Heart right ventricle (tissue), 16 donors: ENCODE measurements at regions of chr5 and their contacts with region 1.

Region 1: DNA sequence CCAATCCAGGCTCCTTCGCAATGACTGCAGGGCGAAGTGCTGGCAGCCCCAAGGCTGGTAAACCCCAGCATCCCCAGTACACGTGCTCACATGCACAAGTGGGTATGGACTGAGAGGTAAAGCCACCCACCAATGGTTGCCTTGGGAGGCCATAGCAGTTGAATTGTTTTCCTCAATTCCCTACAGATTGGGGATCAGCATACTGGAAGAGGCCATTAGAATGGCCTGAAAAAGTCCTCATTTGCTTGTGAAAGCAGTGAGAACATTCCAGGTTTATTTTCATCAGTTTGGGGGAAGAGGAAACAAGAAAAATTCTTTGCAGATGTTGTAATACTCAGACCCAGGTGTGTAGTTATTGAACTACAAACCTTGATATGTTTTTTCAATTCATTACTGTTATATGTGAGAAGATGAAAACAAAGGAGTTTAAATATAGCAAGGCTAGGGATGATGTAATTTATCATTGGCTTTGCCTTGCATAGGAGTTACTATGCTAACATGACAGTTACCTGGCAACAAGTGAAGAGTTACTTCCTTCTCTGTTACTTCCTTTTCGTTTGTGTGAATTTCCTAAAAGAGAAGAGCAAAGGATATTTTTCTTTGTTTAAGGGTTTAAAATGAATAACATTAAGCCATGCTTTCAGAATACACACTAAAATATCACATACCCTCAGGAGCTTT is 36.4 kb downstream of the MTMR12 start:
- DNase-seq: no peak
- ATAC-seq: peak; percentile 56 to 81 (median 74)
- H3K4me3 ChIP-seq: no peak overlapping the region
- H3K27ac ChIP-seq: peak overlapping the region in 9 of 10 donors; percentile 34 to 77 (median 65)
- H3K4me1 ChIP-seq: peaks cover 12 to 69% (median 50%) of the 10 kb centered on the region in 9 donors
- H3K27me3 ChIP-seq: no peaks in the 10 kb centered on the region
- CTCF ChIP-seq: no peak

Region 2: GRCh38 chr5:32190095-32190494 is 86.2 kb before region 1 on chr5:
- intact Hi-C with region 1: no loop called
- DNase-seq: peak; percentile 41 to 64
- ATAC-seq: peak; percentile 67 to 95 (median 86)
- H3K4me3 ChIP-seq: no peak overlapping the region
- H3K27ac ChIP-seq: peak overlapping the region in 8 of 10 donors; percentile 21 to 52 (median 40)
- H3K4me1 ChIP-seq: peaks cover 0 to 20% (median 14%) of the 10 kb centered on the region in 9 donors
- H3K27me3 ChIP-seq: no peaks in the 10 kb centered on the region
- CTCF ChIP-seq: no peak

Region 3: GRCh38 chr5:32312647-32313523 is 36.6 kb after region 1 on chr5 and contains the start of gene MTMR12:
- intact Hi-C with region 1: loop called in 4 of 10 experiments (anchors 5 kb)
- DNase-seq: peak; percentile 100
- ATAC-seq: peak; percentile 97 to 99 (median 98)
- H3K4me3 ChIP-seq: peak within 1 kb of the TSS; percentile 65 to 96 (median 88)
- H3K27ac ChIP-seq: peak within 1 kb of the TSS; percentile 94 to 99 (median 98)
- H3K4me1 ChIP-seq: peaks cover 0 to 46% (median 37%) of the 10 kb centered on the region in 9 donors
- H3K27me3 ChIP-seq: no peaks in the 10 kb centered on the region
- CTCF ChIP-seq: peak in 1 of 9 donors; percentile 18
- total RNA-seq, gene MTMR12: 15.4 to 27.2 (median 19.9) TPM

Region 4: DNA sequence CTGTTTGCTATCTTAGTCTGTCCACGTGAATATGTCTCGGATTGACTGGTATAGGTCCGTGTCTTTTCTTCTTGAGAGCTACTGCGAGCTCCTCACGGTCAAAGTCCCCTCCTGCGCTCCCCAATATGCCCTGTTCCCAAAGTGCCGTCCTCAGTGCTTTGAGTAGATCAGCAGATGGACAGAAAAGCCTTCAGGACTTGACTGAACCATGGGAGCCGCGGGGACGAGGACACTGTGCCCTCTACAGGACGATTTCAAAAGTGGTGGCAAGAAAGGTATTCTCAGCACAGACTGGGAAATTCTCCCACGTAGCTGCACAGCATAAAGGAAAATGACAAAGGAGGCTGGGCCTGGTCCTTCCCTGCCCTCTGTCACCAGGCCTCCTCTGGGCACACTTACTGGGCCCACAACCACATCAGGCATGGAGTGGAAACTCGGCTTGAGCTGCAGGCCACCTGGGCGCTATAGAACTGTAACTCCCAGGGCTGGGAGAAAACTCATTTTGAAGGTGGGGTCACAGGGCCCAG is 53.1 kb after region 1 on chr5:
- intact Hi-C with region 1: loop called in 1 of 10 experiments (anchors 10 kb)
- DNase-seq: peak; percentile 46 to 64
- ATAC-seq: peak; percentile 80 to 94 (median 90)
- H3K4me3 ChIP-seq: no peak overlapping the region
- H3K27ac ChIP-seq: peak overlapping the region in 1 of 10 donors; percentile 14
- H3K4me1 ChIP-seq: peaks cover 0 to 20% (median 4%) of the 10 kb centered on the region in 9 donors
- H3K27me3 ChIP-seq: no peaks in the 10 kb centered on the region
- CTCF ChIP-seq: peak; percentile 55 to 82 (median 76)